ENCODE measurements at regions of chr5 and their contacts with region 1.

Region 1: DNA sequence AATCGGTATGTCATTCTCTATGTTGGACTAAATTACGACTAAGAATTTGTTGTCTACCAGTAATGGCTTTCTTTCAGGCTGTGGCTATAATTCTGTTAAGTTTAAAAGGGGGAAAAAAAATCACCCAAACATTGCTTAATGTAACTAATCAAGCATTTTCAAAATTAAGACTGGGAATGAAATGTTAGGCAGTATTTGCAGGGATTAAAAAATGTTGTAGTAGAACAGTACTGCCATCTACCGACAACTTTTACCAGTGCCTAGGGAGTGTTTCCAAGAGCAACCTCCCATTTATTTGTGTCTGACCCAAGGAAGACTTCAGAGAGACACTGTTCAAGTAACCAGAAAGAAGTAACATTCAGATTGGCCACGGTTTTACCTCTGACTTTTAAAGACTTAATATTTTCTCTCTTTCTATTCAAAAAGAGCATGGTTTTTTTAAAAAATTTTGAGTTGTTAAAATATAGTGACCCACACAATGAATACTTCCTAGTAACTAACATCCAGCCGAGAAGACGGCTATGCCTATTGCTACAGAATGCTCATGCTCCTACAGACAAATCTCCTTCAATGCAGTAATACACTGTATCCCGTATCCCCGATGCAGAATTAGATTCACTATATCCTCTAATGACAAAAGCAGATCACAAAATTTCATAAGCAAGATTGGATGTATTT is 92.4 kb downstream of the ARL15 start:
- DNase-seq: no peak
- ATAC-seq: no peak
- H3K4me3 Mint-ChIP-seq: no peak overlapping the region
- H3K27ac Mint-ChIP-seq: no peak overlapping the region
- H3K4me1 Mint-ChIP-seq: peaks cover 3% of the 10 kb centered on the region
- H3K27me3 Mint-ChIP-seq: no peaks in the 10 kb centered on the region
- CTCF ChIP-seq: peak; percentile 25

Region 2: GRCh38 chr5:52915176-52915875 is 1302.6 kb before region 1 on chr5:
- CTCF ChIA-PET with region 1: no interaction called
- POLR2A ChIA-PET with region 1: no interaction called
- intact Hi-C with region 1: loop called (anchors 10 kb)
- DNase-seq: no peak
- ATAC-seq: peak; percentile 80
- H3K4me3 Mint-ChIP-seq: no peak overlapping the region
- H3K27ac Mint-ChIP-seq: no peak overlapping the region
- H3K4me1 Mint-ChIP-seq: peaks cover 5% of the 10 kb centered on the region
- H3K27me3 Mint-ChIP-seq: peaks cover 2% of the 10 kb centered on the region
- CTCF ChIP-seq: no peak

Region 3: GRCh38 chr5:52948418-52949076 is 1269.4 kb before region 1 on chr5:
- CTCF ChIA-PET with region 1: no interaction called
- POLR2A ChIA-PET with region 1: no interaction called
- intact Hi-C with region 1: loop called (anchors 5 kb)
- DNase-seq: no peak
- ATAC-seq: peak; percentile 96
- H3K4me3 Mint-ChIP-seq: no peak overlapping the region
- H3K27ac Mint-ChIP-seq: no peak overlapping the region
- H3K4me1 Mint-ChIP-seq: peaks cover 10% of the 10 kb centered on the region
- H3K27me3 Mint-ChIP-seq: peaks cover 5% of the 10 kb centered on the region
- CTCF ChIP-seq: no peak

Region 4: GRCh38 chr5:53123702-53124101 is 1094.3 kb before region 1 on chr5:
- CTCF ChIA-PET with region 1: no interaction called
- POLR2A ChIA-PET with region 1: no interaction called
- intact Hi-C with region 1: loop called (anchors 2 kb)
- DNase-seq: no peak
- ATAC-seq: no peak
- H3K4me3 Mint-ChIP-seq: no peak overlapping the region
- H3K27ac Mint-ChIP-seq: no peak overlapping the region
- H3K4me1 Mint-ChIP-seq: no peaks in the 10 kb centered on the region
- H3K27me3 Mint-ChIP-seq: no peaks in the 10 kb centered on the region
- CTCF ChIP-seq: no peak

Region 5: GRCh38 chr5:53170748-53171349 is 1047.1 kb before region 1 on chr5:
- CTCF ChIA-PET with region 1: no interaction called
- POLR2A ChIA-PET with region 1: no interaction called
- intact Hi-C with region 1: loop called (anchors 1 kb)
- DNase-seq: no peak
- ATAC-seq: no peak
- H3K4me3 Mint-ChIP-seq: no peak overlapping the region
- H3K27ac Mint-ChIP-seq: no peak overlapping the region
- H3K4me1 Mint-ChIP-seq: no peaks in the 10 kb centered on the region
- H3K27me3 Mint-ChIP-seq: peaks cover 6% of the 10 kb centered on the region
- CTCF ChIP-seq: no peak

Region 6: DNA sequence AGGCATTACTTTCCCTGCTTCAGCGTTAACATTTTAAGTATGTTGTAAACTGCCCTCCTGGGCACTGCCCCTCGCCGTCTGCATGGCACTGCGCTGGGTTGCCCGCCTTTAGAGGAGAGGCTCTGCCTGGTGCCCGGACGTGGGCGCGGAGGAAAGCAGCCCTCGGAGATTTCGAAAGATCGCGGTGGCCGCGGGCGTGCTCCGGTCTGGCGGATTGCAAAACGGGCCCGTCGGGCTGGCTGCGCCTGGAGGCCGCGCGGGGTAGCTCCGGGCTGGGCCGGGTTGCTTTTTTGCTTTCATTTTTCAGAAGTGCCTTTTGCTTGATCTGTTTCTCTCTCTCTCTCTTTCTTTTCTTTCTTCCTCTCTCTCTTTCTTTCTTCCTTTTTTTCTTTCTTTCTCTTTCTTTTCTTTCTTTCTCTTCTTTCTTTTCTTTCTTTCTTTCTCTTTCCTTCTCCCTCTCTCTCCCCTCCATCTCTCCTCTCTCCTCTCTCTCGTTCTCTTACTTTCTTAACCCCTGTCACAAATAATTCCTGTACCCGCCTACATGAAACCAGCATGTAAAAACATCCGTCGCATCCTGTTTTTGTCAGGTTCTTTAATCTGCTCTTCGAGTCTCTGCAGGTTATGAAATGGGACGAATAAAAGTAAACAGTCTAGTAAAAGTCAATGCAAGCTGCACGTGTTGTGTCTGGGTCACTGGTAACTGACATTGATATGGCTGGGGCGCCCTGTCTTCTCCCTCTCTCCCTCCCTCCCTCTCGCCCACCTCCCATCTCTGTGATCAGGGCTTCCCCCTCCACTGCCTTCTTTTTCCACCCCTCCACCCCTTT is 735.9 kb before region 1 on chr5:
- CTCF ChIA-PET with region 1: no interaction called
- POLR2A ChIA-PET with region 1: no interaction called
- intact Hi-C with region 1: loop called (anchors 1 kb)
- DNase-seq: peak; percentile 40
- ATAC-seq: peak; percentile 62
- H3K4me3 Mint-ChIP-seq: peak overlapping the region; percentile 84
- H3K27ac Mint-ChIP-seq: no peak overlapping the region
- H3K4me1 Mint-ChIP-seq: peaks cover 39% of the 10 kb centered on the region
- H3K27me3 Mint-ChIP-seq: peaks cover 44% of the 10 kb centered on the region
- CTCF ChIP-seq: peak; percentile 24